Activated T-helper 2 cell treated with anti-CD3 and anti-CD28 coated beads, Interferon-gamma antibody, Interleukin-2, Interleukin-4, amounts not matched to agents 10 μg/mL and 5 μg/mL and 100 μg/mL, durations not matched to agents 14 hours and 24 hours and 36 hours (primary cell): ENCODE measurements at regions of chr5 and their contacts with region 1.

Region 1: GRCh38 chr5:173573126-173573960 is 43.1 kb downstream of the BOD1 start:
- DNase-seq: peak; percentile 43
- H3K4me3 Mint-ChIP-seq: no peak overlapping the region
- H3K27ac Mint-ChIP-seq: no peak overlapping the region
- H3K4me1 Mint-ChIP-seq: no peaks in the 10 kb centered on the region
- H3K27me3 Mint-ChIP-seq: peaks cover 12% of the 10 kb centered on the region

Region 2: DNA sequence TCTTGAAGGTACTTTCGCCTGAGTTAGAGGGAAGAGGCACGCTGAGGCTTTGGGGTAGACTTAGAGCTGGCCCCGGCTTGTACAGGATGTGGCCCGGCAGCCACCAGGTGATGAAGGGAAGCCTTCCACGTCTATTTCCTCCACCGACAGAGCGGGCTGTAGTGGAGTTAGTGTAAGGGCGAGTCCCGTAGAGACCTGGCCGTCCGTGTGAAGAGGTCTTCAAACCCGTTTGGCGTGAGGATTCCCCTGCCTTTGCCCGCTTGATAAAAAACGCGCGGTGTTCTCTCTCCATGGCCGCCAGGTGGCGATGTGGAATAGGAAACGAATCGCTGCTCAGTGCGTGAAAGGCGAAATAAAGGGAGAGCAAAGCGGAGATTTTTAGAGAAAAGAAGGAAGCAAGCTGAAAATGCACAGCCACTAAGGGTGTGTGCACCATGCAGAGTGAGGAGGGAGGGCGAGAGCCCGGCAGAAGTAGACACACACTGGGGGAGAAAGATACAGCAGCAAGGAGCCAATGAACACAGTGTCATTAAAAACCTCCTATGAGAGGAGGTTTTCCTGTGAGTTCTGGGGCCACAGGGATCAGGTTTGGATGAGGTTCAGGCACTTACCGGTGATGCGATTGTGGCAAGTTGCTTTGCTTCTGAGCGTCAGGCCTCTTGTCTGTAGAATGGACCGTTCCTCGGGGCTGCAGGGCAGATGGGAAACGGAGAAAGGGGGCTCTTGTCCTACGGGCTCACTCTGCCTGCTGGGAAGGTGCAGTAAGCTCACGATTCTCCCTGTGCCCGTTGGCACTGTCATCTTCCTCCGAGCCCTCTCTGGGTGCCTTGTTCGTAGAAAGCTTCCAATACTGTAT is 279.3 kb before region 1 on chr5:
- intact Hi-C with region 1: loop called (anchors 2 kb)
- DNase-seq: peak; percentile 57
- H3K4me3 Mint-ChIP-seq: peak overlapping the region; percentile 3
- H3K27ac Mint-ChIP-seq: no peak overlapping the region
- H3K4me1 Mint-ChIP-seq: peaks cover 12% of the 10 kb centered on the region
- H3K27me3 Mint-ChIP-seq: peaks cover 51% of the 10 kb centered on the region